ENCODE measurements at regions of chr4 and their contacts with region 1.

Region 1: GRCh38 chr4:3106339-3107186 is 32.1 kb downstream of the HTT start:
- DNase-seq: peak; percentile 97
- H3K4me3 ChIP-seq: no peak overlapping the region
- H3K27ac ChIP-seq: peak overlapping the region; percentile 66
- H3K4me1 ChIP-seq: peaks cover 38% of the 10 kb centered on the region
- H3K27me3 ChIP-seq: no peaks in the 10 kb centered on the region
- CTCF ChIP-seq: peak; percentile 95 to 99
- POLR2A ChIP-seq: no peak

Region 2: DNA sequence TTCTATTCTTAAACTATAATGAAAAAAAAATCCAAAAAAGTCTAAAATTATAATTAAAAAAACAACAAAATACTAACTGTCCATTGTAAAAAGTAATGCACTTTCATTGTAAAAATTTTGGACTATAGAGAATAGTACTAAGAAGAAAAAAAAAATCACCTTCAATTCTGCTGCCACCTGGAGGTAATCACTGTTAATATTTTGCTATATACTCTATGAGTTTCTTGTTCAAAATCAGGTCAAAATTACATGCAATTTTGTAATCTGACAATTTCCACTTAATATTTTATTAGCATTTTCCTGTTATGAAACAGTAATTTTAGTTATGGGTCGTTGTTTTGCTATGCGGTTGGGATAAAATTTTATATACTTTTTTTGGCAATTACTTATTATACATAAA is 29.9 kb after region 1 on chr4:
- CTCF ChIA-PET with region 1: interaction called, 264 read pairs
- POLR2A ChIA-PET with region 1: interaction called, 3 read pairs
- dilution Hi-C with region 1: no loop called
- intact Hi-C with region 1: loop called (anchors 1 kb)
- DNase-seq: peak; percentile 41
- H3K4me3 ChIP-seq: no peak overlapping the region
- H3K27ac ChIP-seq: no peak overlapping the region
- H3K4me1 ChIP-seq: no peaks in the 10 kb centered on the region
- H3K27me3 ChIP-seq: no peaks in the 10 kb centered on the region
- CTCF ChIP-seq: peak in 1 of 2 donors; percentile 6
- POLR2A ChIP-seq: no peak

Region 3: GRCh38 chr4:3193531-3194203 is 87.1 kb after region 1 on chr4:
- CTCF ChIA-PET with region 1: interaction called, 6 read pairs
- POLR2A ChIA-PET with region 1: no interaction called
- dilution Hi-C with region 1: no loop called
- intact Hi-C with region 1: loop called (anchors 1 kb)
- DNase-seq: peak; percentile 44
- H3K4me3 ChIP-seq: no peak overlapping the region
- H3K27ac ChIP-seq: no peak overlapping the region
- H3K4me1 ChIP-seq: no peaks in the 10 kb centered on the region
- H3K27me3 ChIP-seq: no peaks in the 10 kb centered on the region
- CTCF ChIP-seq: peak; percentile 18 to 20
- POLR2A ChIP-seq: no peak

Region 4: GRCh38 chr4:3305598-3306371 is 199.2 kb after region 1 on chr4:
- CTCF ChIA-PET with region 1: no interaction called
- POLR2A ChIA-PET with region 1: no interaction called
- dilution Hi-C with region 1: no loop called
- intact Hi-C with region 1: loop called (anchors 2 kb)
- DNase-seq: peak; percentile 95
- H3K4me3 ChIP-seq: no peak overlapping the region
- H3K27ac ChIP-seq: peak overlapping the region; percentile 83
- H3K4me1 ChIP-seq: peaks cover 63% of the 10 kb centered on the region
- H3K27me3 ChIP-seq: no peaks in the 10 kb centered on the region
- CTCF ChIP-seq: no peak
- POLR2A ChIP-seq: peak; percentile 70

Region 5: DNA sequence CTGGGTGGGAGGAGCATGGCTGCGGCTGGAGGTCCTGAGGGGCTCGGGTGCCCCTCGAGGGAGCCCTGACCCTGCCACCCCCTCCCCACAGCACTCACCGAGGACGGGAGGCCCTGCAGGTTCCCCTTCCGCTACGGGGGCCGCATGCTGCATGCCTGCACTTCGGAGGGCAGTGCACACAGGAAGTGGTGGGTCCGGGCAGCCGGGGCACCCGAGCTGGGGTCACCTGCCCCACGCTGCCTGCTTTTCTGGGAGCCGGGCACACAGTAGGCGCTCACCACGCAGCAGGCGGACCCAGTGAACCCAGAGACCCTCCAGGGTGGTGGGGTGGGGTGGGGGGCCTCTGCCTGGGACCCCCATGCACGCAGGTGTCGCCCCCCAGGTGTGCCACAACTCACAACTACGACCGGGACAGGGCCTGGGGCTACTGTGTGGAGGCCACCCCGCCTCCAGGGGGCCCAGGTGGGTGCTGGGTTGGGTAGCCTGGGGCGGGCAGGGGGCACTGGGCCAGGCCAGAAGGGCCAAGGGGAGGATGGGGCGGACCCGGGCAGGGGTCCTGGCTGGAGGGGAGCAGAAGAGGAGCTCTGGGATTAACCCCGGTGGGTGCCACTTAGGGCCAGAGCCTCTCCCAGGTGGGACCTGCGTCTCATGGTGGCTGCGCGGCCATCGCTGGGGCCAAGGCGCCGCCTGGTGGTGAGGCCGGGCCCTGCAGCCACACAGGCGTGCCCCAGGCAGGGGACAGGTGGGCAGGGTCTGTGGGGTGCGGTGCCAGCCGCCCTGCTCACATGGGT is 336.6 kb after region 1 on chr4:
- CTCF ChIA-PET with region 1: interaction called, 3 read pairs
- POLR2A ChIA-PET with region 1: no interaction called
- dilution Hi-C with region 1: no loop called
- intact Hi-C with region 1: loop called (anchors 1 kb)
- DNase-seq: peak; percentile 27
- H3K4me3 ChIP-seq: no peak overlapping the region
- H3K27ac ChIP-seq: no peak overlapping the region
- H3K4me1 ChIP-seq: no peaks in the 10 kb centered on the region
- H3K27me3 ChIP-seq: no peaks in the 10 kb centered on the region
- CTCF ChIP-seq: peak; percentile 95 to 98
- POLR2A ChIP-seq: no peak